Activated naive CD4-positive, alpha-beta T cell treated with anti-CD3 and anti-CD28 coated beads for 36 hours (primary cell): ENCODE measurements at regions of chrX and their contacts with region 1.

Region 1: GRCh38 chrX:37787423-37787869 is 7.6 kb downstream of the CYBB start:
- DNase-seq: no peak
- H3K4me3 Mint-ChIP-seq: no peak overlapping the region
- H3K27ac Mint-ChIP-seq: no peak overlapping the region
- H3K4me1 Mint-ChIP-seq: peaks cover 21% of the 10 kb centered on the region
- H3K27me3 Mint-ChIP-seq: no peaks in the 10 kb centered on the region

Region 2: DNA sequence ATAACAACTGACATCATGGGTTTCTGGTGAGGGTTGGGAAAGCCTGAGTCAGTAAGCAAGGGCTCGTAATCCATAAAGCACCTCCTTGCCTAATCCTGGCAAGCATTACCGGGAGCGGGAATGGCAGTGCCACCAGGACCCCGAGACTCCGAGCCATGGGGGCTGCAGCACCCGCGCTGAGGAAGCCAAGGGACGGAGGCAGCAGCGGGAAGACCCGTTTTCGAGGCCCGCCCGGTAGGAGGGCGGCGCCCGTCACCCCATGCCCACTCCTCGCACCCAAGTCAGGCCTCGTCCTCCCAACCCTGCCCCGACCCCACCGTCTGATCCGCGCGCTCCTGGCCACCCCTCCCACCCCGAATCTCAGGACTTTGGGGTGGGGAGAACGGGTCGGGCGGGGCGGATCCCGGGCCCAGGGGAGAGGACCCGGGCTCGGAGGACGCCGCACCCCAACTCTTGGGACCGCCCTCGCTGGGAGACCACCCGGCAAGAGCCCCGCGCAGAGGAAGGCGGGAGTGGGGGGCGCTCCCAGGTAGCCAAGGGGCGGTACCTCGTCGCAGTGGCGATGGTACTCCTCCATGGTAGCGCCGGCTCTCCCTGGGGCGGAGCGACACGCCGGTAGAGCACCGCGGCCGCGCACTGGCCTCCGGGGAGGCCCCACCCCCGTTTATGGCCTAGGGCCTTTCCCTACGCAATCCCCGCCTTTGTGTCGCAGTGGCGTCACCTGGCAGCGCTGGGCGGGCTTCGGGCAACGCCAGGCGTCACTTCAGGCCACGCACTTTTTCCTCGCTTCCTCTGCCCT is 59.7 kb after region 1 on chrX and contains the start of gene DYNLT3:
- CTCF ChIA-PET with region 1: no interaction called
- intact Hi-C with region 1: loop called (anchors 2 kb)
- DNase-seq: peak; percentile 83
- H3K4me3 Mint-ChIP-seq: peak within 1 kb of the TSS; percentile 72
- H3K27ac Mint-ChIP-seq: peak within 1 kb of the TSS; percentile 81
- H3K4me1 Mint-ChIP-seq: peaks cover 19% of the 10 kb centered on the region
- H3K27me3 Mint-ChIP-seq: no peaks in the 10 kb centered on the region
- total RNA-seq, gene DYNLT3: 11.8 to 14.4 TPM